ENCODE measurements at regions of chr5 and their contacts with region 1.

Region 1: GRCh38 chr5:75236322-75237316 is at the start of gene ANKRD31:
- DNase-seq: peak; percentile 83 to 95 (median 91)
- ATAC-seq: peak; percentile 93 to 95
- H3K4me3 Mint-ChIP-seq: peak within 1 kb of the TSS; percentile 80 to 98 (median 94)
- H3K27ac Mint-ChIP-seq: peak within 1 kb of the TSS; percentile 97 to 100 (median 98)
- H3K4me1 Mint-ChIP-seq: peaks cover 4 to 24% (median 22%) of the 10 kb centered on the region in 4 donors
- H3K27me3 Mint-ChIP-seq: no peaks in the 10 kb centered on the region
- polyA plus RNA-seq, gene ANKRD31: 0.55 to 0.58 (median 0.55) TPM

Region 2: GRCh38 chr5:74934949-74935751 is 301.5 kb before region 1 on chr5:
- POLR2A ChIA-PET with region 1: interaction called, 20 read pairs
- DNase-seq: peak in 7 of 10 donors; percentile 2 to 60 (median 18)
- ATAC-seq: peak; percentile 87 to 88
- H3K4me3 Mint-ChIP-seq: peak overlapping the region; percentile 63 to 80 (median 74)
- H3K27ac Mint-ChIP-seq: peak overlapping the region; percentile 28 to 91 (median 80)
- H3K4me1 Mint-ChIP-seq: peaks cover 16 to 34% (median 30%) of the 10 kb centered on the region in 4 donors
- H3K27me3 Mint-ChIP-seq: peaks cover 0 to 12% (median 0%) of the 10 kb centered on the region in 5 donors

Region 3: DNA sequence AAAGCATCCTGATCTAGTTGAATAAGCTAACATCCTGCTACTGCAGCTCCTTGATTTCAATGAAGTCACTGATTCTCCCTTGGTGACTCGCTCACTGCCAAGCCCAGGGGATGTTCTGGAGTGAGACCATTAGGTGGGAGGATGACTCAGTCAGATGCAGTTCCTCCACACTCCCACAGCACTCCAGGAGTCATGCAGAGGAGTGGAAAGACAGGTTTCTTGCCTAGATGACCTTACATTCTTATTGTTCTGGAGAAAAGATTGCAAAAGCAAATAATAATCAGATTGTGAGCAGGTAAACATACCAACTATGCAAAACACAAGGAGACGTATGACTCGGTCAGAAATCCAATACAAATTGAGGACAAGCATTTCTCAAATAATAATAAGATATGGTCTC is 199.5 kb before region 1 on chr5:
- POLR2A ChIA-PET with region 1: interaction called, 22 read pairs
- DNase-seq: no peak
- ATAC-seq: no peak
- H3K4me3 Mint-ChIP-seq: peak overlapping the region in 2 of 10 donors; percentile 3 to 54
- H3K27ac Mint-ChIP-seq: peak overlapping the region; percentile 43 to 94 (median 85)
- H3K4me1 Mint-ChIP-seq: peaks cover 36 to 85% (median 72%) of the 10 kb centered on the region in 4 donors
- H3K27me3 Mint-ChIP-seq: no peaks in the 10 kb centered on the region

Region 4: DNA sequence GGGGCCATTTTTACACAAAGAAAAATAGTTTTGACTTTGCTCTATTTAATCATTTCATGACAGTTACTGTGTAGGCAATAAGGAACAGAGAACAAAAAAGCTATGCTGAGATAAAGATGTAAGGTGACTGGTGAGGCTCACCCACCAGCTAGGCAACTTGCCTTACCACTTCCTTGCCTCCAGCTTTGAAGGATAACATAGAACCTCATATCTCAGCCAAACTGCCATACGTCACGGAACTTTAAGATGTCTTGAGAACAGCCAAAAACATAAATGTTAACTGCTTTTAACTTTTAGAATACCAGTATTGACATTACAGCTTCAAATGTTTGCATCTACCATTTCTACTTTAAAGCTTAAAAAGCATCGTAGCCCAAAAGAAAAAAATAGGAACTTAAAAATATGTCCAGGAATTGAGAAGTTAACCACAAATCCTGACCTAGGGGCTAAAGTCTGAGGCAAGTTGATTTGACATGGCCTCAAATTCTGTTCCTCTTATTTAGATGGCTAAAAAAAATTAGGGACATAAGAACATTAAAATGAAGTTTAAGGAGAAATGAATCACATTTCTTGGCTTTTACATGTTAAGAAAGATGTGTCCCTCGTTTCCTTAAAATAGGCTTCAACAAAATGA is 176.6 kb before region 1 on chr5:
- POLR2A ChIA-PET with region 1: interaction called, 201 read pairs
- DNase-seq: peak; percentile 30 to 94 (median 74)
- ATAC-seq: peak; percentile 88 to 97
- H3K4me3 Mint-ChIP-seq: peak overlapping the region; percentile 34 to 82 (median 69)
- H3K27ac Mint-ChIP-seq: peak overlapping the region; percentile 94 to 98 (median 98)
- H3K4me1 Mint-ChIP-seq: peaks cover 38 to 87% (median 81%) of the 10 kb centered on the region in 4 donors
- H3K27me3 Mint-ChIP-seq: peaks cover 0 to 5% (median 0%) of the 10 kb centered on the region in 5 donors

Region 5: DNA sequence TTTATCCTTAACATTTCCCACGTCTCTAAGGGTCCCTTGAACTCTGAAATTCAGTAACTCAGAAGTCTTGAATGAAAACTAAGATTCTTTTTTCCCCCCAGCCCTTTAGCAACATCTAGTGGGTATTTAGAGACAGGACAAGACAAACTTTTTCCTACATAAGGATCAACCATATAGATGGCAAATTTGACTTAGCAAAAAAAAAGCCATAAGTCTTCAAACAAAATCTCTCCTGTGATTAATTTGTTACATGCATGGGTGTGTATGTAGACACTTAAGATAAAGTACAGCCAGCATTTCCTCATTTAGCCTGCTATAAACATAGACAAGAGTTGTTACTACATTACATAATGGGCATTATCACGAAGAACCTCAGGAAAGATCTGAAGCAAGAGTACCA is 29.1 kb after region 1 on chr5:
- POLR2A ChIA-PET with region 1: interaction called, 13 read pairs
- DNase-seq: peak in 4 of 10 donors; percentile 5 to 65 (median 58)
- ATAC-seq: peak; percentile 72 to 77
- H3K4me3 Mint-ChIP-seq: no peak overlapping the region
- H3K27ac Mint-ChIP-seq: peak overlapping the region in 1 of 10 donors; percentile 34
- H3K4me1 Mint-ChIP-seq: peaks cover 0 to 7% (median 2%) of the 10 kb centered on the region in 4 donors
- H3K27me3 Mint-ChIP-seq: peaks cover 0 to 5% (median 0%) of the 10 kb centered on the region in 5 donors

Region 6: GRCh38 chr5:75336625-75337339 is 100.2 kb after region 1 on chr5 and contains the start of gene HMGCR:
- POLR2A ChIA-PET with region 1: interaction called, 35 read pairs
- DNase-seq: peak; percentile 87 to 99 (median 97)
- ATAC-seq: peak; percentile 94 to 95
- H3K4me3 Mint-ChIP-seq: no peak within 1 kb of the TSS
- H3K27ac Mint-ChIP-seq: peak within 1 kb of the TSS in 3 of 10 donors; percentile 74 to 94 (median 91)
- H3K4me1 Mint-ChIP-seq: peaks cover 16 to 38% (median 32%) of the 10 kb centered on the region in 4 donors
- H3K27me3 Mint-ChIP-seq: peaks cover 0 to under 1% (median 0%) of the 10 kb centered on the region in 5 donors
- polyA plus RNA-seq, gene HMGCR: 8.2 to 11.0 (median 9.3) TPM

Measured in naive thymus-derived CD8-positive, alpha-beta T cell (primary cell).